ENCODE measurements at regions of chr12 and their contacts with region 1.

Region 1: GRCh38 chr12:71415336-71416231 is 24.0 kb upstream of the LGR5 start:
- DNase-seq: peak; percentile 45
- ATAC-seq: peak; percentile 91
- H3K4me3 ChIP-seq: no peak overlapping the region
- H3K27ac ChIP-seq: no peak overlapping the region
- H3K4me1 ChIP-seq: no peaks in the 10 kb centered on the region
- H3K27me3 ChIP-seq: no peaks in the 10 kb centered on the region
- CTCF ChIP-seq: peak; percentile 76; the same call in 1 of the 2 replicates

Region 2: DNA sequence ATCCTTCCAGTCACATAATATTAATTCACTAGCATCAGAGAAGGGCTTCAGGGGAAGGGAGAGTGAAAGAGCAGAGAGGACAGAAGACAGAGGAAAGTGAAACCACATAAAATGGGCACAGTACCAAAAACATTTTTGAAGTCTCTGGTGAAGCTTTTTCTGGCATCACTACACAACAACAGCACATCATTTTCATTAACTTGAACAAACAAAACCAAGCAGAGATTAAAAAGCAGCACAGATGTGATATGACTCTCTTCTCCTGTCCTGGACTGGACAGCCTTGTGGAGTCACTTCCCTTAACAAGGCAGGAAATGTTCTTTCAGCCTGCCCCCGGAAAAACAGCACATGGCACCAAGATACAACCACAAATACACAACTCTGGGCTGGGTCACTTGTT is 369.8 kb before region 1 on chr12:
- CTCF ChIA-PET with region 1: no interaction called
- POLR2A ChIA-PET with region 1: no interaction called
- in situ Hi-C with region 1: no loop called
- intact Hi-C with region 1: no loop called
- DNase-seq: no peak
- ATAC-seq: no peak
- H3K4me3 ChIP-seq: no peak overlapping the region
- H3K27ac ChIP-seq: no peak overlapping the region
- H3K4me1 ChIP-seq: no peaks in the 10 kb centered on the region
- H3K27me3 ChIP-seq: no peaks in the 10 kb centered on the region
- CTCF ChIP-seq: no peak

Region 3: DNA sequence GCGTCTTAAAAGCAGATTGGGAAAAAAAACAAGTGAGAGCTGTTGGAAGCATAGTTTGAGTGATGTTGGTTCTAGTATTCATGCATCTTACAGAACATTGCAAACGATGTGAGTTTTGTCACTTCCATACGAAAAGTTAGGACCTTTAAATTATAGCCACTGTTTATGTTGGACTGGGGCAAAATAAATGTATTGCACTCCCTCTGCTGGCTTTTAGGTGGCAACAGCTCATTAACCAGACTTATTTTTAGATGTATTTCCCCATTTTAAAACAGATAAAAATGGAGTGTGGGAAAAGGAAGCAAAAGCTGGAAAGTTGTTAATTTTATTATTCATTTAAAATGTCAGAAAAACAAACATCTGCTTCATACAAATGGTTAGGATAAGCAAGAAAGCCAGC is 135.9 kb after region 1 on chr12:
- CTCF ChIA-PET with region 1: interaction called, 3 read pairs
- POLR2A ChIA-PET with region 1: no interaction called
- in situ Hi-C with region 1: no loop called
- intact Hi-C with region 1: loop called (anchors 5 kb)
- DNase-seq: no peak
- ATAC-seq: no peak
- H3K4me3 ChIP-seq: no peak overlapping the region
- H3K27ac ChIP-seq: no peak overlapping the region
- H3K4me1 ChIP-seq: no peaks in the 10 kb centered on the region
- H3K27me3 ChIP-seq: no peaks in the 10 kb centered on the region
- CTCF ChIP-seq: peak; percentile 57; the same call in 1 of the 2 replicates

Region 4: GRCh38 chr12:71636704-71637115 is 221.1 kb after region 1 on chr12:
- CTCF ChIA-PET with region 1: no interaction called
- POLR2A ChIA-PET with region 1: no interaction called
- in situ Hi-C with region 1: no loop called
- intact Hi-C with region 1: loop called (anchors 5 kb)
- DNase-seq: peak; percentile 27
- ATAC-seq: peak; percentile 48; the same call in 1 of the 2 replicates
- H3K4me3 ChIP-seq: no peak overlapping the region
- H3K27ac ChIP-seq: peak overlapping the region; percentile 36; the same call in 1 of the 2 replicates
- H3K4me1 ChIP-seq: no peaks in the 10 kb centered on the region; the same call in 1 of the 2 replicates
- H3K27me3 ChIP-seq: no peaks in the 10 kb centered on the region
- CTCF ChIP-seq: peak; percentile 81